PC-3 (cell line): ENCODE measurements at regions of chr12 and their contacts with region 1.

Region 1: GRCh38 chr12:6423267-6424007 is 21.3 kb upstream of the CD27 start:
- DNase-seq: peak; percentile 84
- ATAC-seq: peak; percentile 95
- H3K4me3 ChIP-seq: no peak overlapping the region
- H3K27ac ChIP-seq: no peak overlapping the region
- H3K4me1 ChIP-seq: peaks cover 9% of the 10 kb centered on the region
- H3K27me3 ChIP-seq: no peaks in the 10 kb centered on the region
- CTCF ChIP-seq: peak; percentile 77

Region 2: DNA sequence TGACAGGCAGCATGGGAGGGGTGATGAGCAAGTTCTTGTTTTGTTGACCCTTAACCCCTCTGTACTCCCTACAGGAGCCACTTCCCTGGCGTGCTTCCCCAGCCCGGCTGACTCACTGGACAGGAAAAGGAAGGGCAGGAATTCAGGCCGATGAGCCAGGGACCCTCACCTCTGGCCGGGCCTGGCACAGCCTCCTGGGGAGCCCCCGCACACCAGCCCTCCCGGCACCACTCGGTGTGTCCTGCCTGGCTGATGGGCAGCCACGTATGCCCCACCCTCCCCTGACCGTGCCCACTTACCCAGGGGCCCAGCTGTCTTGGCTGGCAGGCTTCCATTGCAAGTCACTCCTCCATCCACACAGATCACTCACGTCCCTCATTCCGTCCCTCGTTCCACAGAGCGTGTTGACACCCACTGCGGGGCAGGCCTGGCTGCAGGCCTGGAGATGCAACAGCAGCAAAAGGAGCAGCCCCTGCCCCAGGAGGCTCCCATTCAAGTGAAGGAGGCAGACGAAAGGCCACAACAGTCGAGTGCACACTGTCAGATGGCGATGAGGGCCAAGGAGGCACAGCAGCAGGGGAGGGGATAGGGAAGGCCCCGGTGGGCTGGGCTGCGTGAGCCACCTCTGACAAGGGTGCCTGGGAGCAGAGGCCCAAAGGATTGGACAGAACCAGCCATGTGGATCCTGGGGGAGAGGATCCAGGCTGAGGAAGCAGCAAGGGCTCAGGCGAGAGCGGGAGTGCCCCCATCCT is 243.0 kb before region 1 on chr12:
- CTCF ChIA-PET with region 1: no interaction called
- POLR2A ChIA-PET with region 1: no interaction called
- intact Hi-C with region 1: no loop called
- DNase-seq: peak; percentile 84
- ATAC-seq: peak; percentile 79
- H3K4me3 ChIP-seq: no peak overlapping the region
- H3K27ac ChIP-seq: peak overlapping the region; percentile 73
- H3K4me1 ChIP-seq: peaks cover 31% of the 10 kb centered on the region
- H3K27me3 ChIP-seq: no peaks in the 10 kb centered on the region
- CTCF ChIP-seq: no peak

Region 3: GRCh38 chr12:6407236-6407954 is 16.0 kb before region 1 on chr12:
- CTCF ChIA-PET with region 1: no interaction called
- POLR2A ChIA-PET with region 1: no interaction called
- intact Hi-C with region 1: no loop called
- DNase-seq: no peak
- ATAC-seq: no peak
- H3K4me3 ChIP-seq: no peak overlapping the region
- H3K27ac ChIP-seq: no peak overlapping the region
- H3K4me1 ChIP-seq: no peaks in the 10 kb centered on the region
- H3K27me3 ChIP-seq: no peaks in the 10 kb centered on the region
- CTCF ChIP-seq: no peak

Region 4: GRCh38 chr12:6554168-6555017 is 131.0 kb after region 1 on chr12:
- CTCF ChIA-PET with region 1: no interaction called
- POLR2A ChIA-PET with region 1: no interaction called
- intact Hi-C with region 1: loop called (anchors 5 kb)
- DNase-seq: peak; percentile 57
- ATAC-seq: peak; percentile 46
- H3K4me3 ChIP-seq: no peak overlapping the region
- H3K27ac ChIP-seq: no peak overlapping the region
- H3K4me1 ChIP-seq: peaks cover under 1% of the 10 kb centered on the region; the same call in 1 of the 2 replicates
- H3K27me3 ChIP-seq: no peaks in the 10 kb centered on the region
- CTCF ChIP-seq: peak; percentile 55